Naive thymus-derived CD4-positive, alpha-beta T cell (primary cell): ENCODE measurements at regions of chr13 and their contacts with region 1.

Region 1: DNA sequence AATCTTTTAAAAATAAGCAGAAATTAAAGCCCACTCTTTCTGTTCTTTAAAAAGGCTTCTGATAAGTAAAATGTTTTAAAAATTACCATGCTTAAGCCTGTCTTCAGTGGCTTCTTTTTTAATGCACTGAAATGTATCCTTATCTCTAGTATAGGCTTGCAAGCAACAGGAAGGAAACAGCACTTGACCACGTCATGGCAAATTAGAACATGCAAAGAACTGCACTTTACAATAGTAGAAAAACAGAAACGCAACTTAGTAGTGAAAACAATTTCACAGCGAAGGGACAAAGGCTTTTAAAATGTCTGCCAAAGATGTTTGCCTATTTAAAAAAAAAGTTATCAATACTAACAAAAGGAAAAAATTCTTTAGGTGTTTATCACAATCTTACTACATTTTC is 36.3 kb downstream of the ELF1 start:
- DNase-seq: peak in 8 of 9 donors; percentile 41 to 90 (median 80)
- ATAC-seq: peak; percentile 82
- H3K4me3 ChIP-seq: no peak overlapping the region
- H3K4me3 Mint-ChIP-seq: peak overlapping the region; percentile 76 to 99 (median 94)
- H3K27ac ChIP-seq: peak overlapping the region; percentile 86
- H3K27ac Mint-ChIP-seq: peak overlapping the region; percentile 93 to 98 (median 96)
- H3K4me1 ChIP-seq: peaks cover 30 to 34% of the 10 kb centered on the region in 2 donors
- H3K4me1 Mint-ChIP-seq: peaks cover 40 to 77% (median 65%) of the 10 kb centered on the region in 7 donors
- H3K27me3 ChIP-seq: no peaks in the 10 kb centered on the region
- H3K27me3 Mint-ChIP-seq: no peaks in the 10 kb centered on the region

Region 2: DNA sequence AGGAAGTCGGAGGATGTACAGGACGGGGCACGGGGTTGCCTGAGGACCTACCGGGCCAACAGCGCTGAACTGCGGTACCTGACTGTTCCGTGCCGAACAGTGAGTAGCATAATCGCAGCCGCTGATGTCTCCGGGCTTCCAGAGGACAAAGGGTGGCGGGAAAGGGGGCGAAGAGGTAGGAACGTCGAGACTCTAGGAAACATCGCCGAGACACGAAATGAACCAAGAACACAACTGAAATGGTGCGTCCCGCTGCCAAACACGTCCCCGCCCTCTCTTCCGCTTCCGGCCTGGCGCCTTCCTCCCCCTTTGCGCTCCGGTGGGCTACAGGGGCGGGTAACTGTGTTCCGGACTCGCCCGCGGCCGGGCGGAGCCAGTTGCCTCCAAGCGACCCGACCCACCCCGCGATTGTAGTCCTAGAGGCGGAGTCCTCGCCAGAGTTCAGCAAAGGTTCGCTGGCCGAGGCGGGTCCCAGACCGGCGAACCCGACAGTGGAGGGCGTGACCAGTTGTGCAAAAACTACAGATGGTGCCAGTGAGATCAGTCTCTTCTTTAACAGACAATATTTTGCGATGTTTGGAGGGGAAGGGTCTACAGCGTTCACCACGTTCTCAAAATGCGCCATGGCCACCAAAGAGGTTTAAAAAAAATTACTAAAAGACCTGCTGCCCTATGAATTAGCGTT is 211.7 kb before region 1 on chr13 and contains the start of gene MRPS31:
- CTCF ChIA-PET with region 1: interaction called, 3 read pairs
- POLR2A ChIA-PET with region 1: no interaction called
- intact Hi-C with region 1: loop called in 1 of 2 experiments (anchors 5 kb)
- DNase-seq: peak; percentile 89 to 97 (median 93)
- ATAC-seq: peak; percentile 99
- H3K4me3 ChIP-seq: peak within 1 kb of the TSS; percentile 78
- H3K4me3 Mint-ChIP-seq: peak within 1 kb of the TSS; percentile 94 to 100 (median 99)
- H3K27ac ChIP-seq: peak within 1 kb of the TSS; percentile 89
- H3K27ac Mint-ChIP-seq: peak within 1 kb of the TSS; percentile 93 to 100 (median 98)
- H3K4me1 ChIP-seq: peaks cover 15 to 16% of the 10 kb centered on the region in 2 donors
- H3K4me1 Mint-ChIP-seq: peaks cover 16 to 41% (median 33%) of the 10 kb centered on the region in 7 donors
- H3K27me3 ChIP-seq: no peaks in the 10 kb centered on the region
- H3K27me3 Mint-ChIP-seq: no peaks in the 10 kb centered on the region
- total RNA-seq, gene MRPS31: 15.8 to 39.9 (median 34.7) TPM

Region 3: GRCh38 chr13:40963919-40964318 is 18.9 kb before region 1 on chr13:
- CTCF ChIA-PET with region 1: no interaction called
- POLR2A ChIA-PET with region 1: interaction called, 5 read pairs
- intact Hi-C with region 1: loop called in 1 of 2 experiments (anchors 2 kb)
- DNase-seq: no peak
- ATAC-seq: peak; percentile 38
- H3K4me3 ChIP-seq: no peak overlapping the region
- H3K4me3 Mint-ChIP-seq: peak overlapping the region in 9 of 10 donors; percentile 4 to 88 (median 35)
- H3K27ac ChIP-seq: no peak overlapping the region
- H3K27ac Mint-ChIP-seq: peak overlapping the region in 4 of 9 donors; percentile 44 to 83 (median 76)
- H3K4me1 ChIP-seq: peaks cover 40 to 62% of the 10 kb centered on the region in 2 donors
- H3K4me1 Mint-ChIP-seq: peaks cover 65 to 95% (median 89%) of the 10 kb centered on the region in 7 donors
- H3K27me3 ChIP-seq: no peaks in the 10 kb centered on the region
- H3K27me3 Mint-ChIP-seq: no peaks in the 10 kb centered on the region

Region 4: DNA sequence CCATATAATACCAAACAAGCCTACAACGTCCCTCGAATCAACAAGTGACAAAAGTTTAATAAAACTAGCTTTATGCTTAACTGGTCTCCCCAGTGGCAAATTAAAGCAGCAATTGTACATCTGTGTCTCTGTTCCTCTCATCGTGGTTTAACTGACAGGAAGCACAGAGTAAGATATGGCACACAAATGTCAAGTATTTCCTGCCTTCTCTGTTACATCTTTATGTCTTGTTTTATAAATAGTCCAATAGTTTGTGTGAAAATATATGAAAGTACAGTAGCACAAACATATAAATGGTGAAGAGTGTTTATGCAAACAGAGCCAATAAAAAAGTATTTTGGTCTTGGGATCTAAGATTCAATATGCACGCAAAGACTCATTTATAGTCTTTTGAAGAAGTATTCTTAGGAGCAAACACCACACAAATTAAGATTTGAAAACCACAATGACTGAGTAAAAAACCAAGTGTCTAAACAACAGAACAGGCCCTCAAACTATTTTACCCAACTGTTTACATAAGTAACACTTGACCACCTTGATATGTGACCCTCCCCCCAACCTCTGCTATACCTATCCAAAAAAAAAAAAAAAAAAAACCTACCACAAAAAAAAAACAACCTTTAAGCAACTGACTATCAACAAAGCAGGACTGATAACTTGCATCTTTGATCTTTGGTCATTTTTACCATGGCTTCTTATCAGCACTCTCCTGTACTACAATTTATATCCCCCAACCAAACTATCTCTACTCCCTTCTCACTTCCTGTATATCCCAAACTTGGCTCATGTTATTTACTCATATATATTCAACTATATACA is 22.3 kb after region 1 on chr13:
- CTCF ChIA-PET with region 1: interaction called, 3 read pairs
- POLR2A ChIA-PET with region 1: interaction called, 11 read pairs
- intact Hi-C with region 1: loop called (anchors 1 kb)
- DNase-seq: peak in 7 of 9 donors; percentile 52 to 74 (median 65)
- ATAC-seq: peak; percentile 90
- H3K4me3 ChIP-seq: peak overlapping the region; percentile 6
- H3K4me3 Mint-ChIP-seq: peak overlapping the region; percentile 4 to 87 (median 69)
- H3K27ac ChIP-seq: peak overlapping the region; percentile 67
- H3K27ac Mint-ChIP-seq: peak overlapping the region; percentile 58 to 89 (median 88)
- H3K4me1 ChIP-seq: peaks cover 61 to 62% of the 10 kb centered on the region in 2 donors
- H3K4me1 Mint-ChIP-seq: peaks cover 51 to 92% (median 82%) of the 10 kb centered on the region in 7 donors
- H3K27me3 ChIP-seq: no peaks in the 10 kb centered on the region
- H3K27me3 Mint-ChIP-seq: no peaks in the 10 kb centered on the region

Region 5: DNA sequence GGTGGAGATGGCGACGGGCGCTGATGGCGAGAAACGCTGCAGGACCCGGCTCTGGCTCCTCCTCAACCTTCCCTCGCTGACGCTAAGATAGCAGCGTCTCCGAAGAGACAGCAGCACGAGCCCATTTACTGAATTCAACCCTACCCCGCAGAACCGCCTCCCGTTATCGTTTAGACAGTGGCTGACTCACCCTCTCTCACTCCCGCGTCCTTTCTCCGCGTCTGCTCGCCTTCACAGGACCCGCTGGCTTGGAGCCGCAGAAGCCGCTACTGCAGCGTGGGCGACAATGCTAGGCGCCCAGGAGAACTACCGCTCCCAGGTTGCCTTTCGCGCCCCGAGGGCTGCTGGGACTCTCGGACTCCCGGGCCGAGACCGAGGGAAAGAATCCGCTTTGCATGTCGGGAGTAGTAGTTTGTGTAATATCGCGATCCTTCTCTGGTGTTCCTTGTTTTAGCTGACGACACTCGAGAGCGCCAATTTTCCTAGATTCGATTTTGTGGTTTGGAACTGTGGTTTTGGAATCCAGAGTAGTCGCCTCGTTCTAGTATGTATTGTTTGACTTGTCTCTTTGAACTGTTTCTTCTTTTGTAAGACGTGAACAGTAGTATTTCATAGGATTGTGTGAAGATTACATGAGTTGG is 149.9 kb after region 1 on chr13 and contains the start of gene KBTBD6:
- CTCF ChIA-PET with region 1: no interaction called
- POLR2A ChIA-PET with region 1: no interaction called
- intact Hi-C with region 1: loop called in 1 of 2 experiments (anchors 5 kb)
- DNase-seq: peak; percentile 76 to 93 (median 87)
- ATAC-seq: peak; percentile 98
- H3K4me3 ChIP-seq: peak within 1 kb of the TSS; percentile 77
- H3K4me3 Mint-ChIP-seq: peak within 1 kb of the TSS; percentile 94 to 99 (median 98)
- H3K27ac ChIP-seq: peak within 1 kb of the TSS; percentile 67
- H3K27ac Mint-ChIP-seq: peak within 1 kb of the TSS; percentile 91 to 97 (median 93)
- H3K4me1 ChIP-seq: peaks cover 15 to 24% of the 10 kb centered on the region in 2 donors
- H3K4me1 Mint-ChIP-seq: peaks cover 32 to 60% (median 54%) of the 10 kb centered on the region in 7 donors
- H3K27me3 ChIP-seq: no peaks in the 10 kb centered on the region
- H3K27me3 Mint-ChIP-seq: no peaks in the 10 kb centered on the region
- total RNA-seq, gene KBTBD6: 3.9 to 9.2 (median 7.7) TPM

Region 6: GRCh38 chr13:41465241-41465847 is 482.6 kb after region 1 on chr13:
- CTCF ChIA-PET with region 1: no interaction called
- POLR2A ChIA-PET with region 1: no interaction called
- intact Hi-C with region 1: loop called in 1 of 2 experiments (anchors 1 kb)
- DNase-seq: peak; percentile 63 to 90 (median 89)
- ATAC-seq: peak; percentile 72
- H3K4me3 ChIP-seq: peak overlapping the region; percentile 51
- H3K4me3 Mint-ChIP-seq: peak overlapping the region; percentile 89 to 98 (median 94)
- H3K27ac ChIP-seq: peak overlapping the region; percentile 97
- H3K27ac Mint-ChIP-seq: peak overlapping the region; percentile 96 to 100 (median 99)
- H3K4me1 ChIP-seq: peaks cover 64 to 87% of the 10 kb centered on the region in 2 donors
- H3K4me1 Mint-ChIP-seq: peaks cover 64 to 98% (median 93%) of the 10 kb centered on the region in 7 donors
- H3K27me3 ChIP-seq: no peaks in the 10 kb centered on the region
- H3K27me3 Mint-ChIP-seq: no peaks in the 10 kb centered on the region